PC-3 (cell line): ENCODE measurements at regions of chr3 and their contacts with region 1.

Region 1: DNA sequence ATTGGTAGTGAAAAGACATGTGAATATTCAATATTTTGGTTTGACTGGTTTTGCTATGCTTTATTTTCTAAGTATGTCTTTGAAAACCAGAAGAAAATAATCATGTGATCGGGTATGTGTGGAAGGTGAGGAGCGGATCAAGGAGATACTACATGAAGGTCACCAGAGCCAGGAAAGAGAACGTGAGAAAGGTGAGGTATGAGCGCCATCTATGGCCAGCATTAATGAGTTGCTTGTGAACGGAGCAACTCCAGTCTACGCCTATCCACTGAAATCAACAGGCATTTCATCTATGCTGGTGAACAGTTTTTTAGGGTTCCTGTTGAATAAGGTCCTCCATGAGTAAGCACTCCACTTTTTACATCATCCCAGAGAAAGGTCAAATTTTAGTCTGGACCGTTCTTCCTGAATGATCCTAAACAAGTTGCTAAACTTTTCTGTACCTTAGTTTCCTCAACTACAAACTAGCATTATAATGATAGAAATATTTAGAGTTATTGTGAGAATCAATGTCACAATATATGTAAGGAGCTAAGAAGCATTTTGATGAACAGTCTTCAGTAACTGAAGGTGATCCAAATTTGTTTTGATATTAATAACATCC is 1435.2 kb upstream of the CADM2 start:
- DNase-seq: peak; percentile 84
- ATAC-seq: peak; percentile 99
- H3K4me3 ChIP-seq: no peak overlapping the region
- H3K27ac ChIP-seq: no peak overlapping the region
- H3K4me1 ChIP-seq: no peaks in the 10 kb centered on the region
- H3K27me3 ChIP-seq: no peaks in the 10 kb centered on the region
- CTCF ChIP-seq: peak; percentile 92

Region 2: GRCh38 chr3:81871358-81872155 is 1652.0 kb before region 1 on chr3:
- CTCF ChIA-PET with region 1: no interaction called
- POLR2A ChIA-PET with region 1: no interaction called
- intact Hi-C with region 1: loop called (anchors 2 kb)
- DNase-seq: peak; percentile 19
- ATAC-seq: no peak
- H3K4me3 ChIP-seq: no peak overlapping the region
- H3K27ac ChIP-seq: no peak overlapping the region
- H3K4me1 ChIP-seq: no peaks in the 10 kb centered on the region
- H3K27me3 ChIP-seq: no peaks in the 10 kb centered on the region
- CTCF ChIP-seq: peak; percentile 65

Region 3: GRCh38 chr3:82643948-82644347 is 879.6 kb before region 1 on chr3:
- CTCF ChIA-PET with region 1: no interaction called
- POLR2A ChIA-PET with region 1: no interaction called
- intact Hi-C with region 1: loop called (anchors 1 kb)
- DNase-seq: peak; percentile 51
- ATAC-seq: peak; percentile 92
- H3K4me3 ChIP-seq: no peak overlapping the region
- H3K27ac ChIP-seq: no peak overlapping the region
- H3K4me1 ChIP-seq: 0 out of 2 replicates have a peak, but pooled peaks cover 4% of the 10 kb centered on the region
- H3K27me3 ChIP-seq: no peaks in the 10 kb centered on the region
- CTCF ChIP-seq: peak; percentile 55

Region 4: GRCh38 chr3:83235180-83235814 is 288.3 kb before region 1 on chr3:
- CTCF ChIA-PET with region 1: no interaction called
- POLR2A ChIA-PET with region 1: no interaction called
- intact Hi-C with region 1: loop called (anchors 5 kb)
- DNase-seq: peak; percentile 68
- ATAC-seq: peak; percentile 96
- H3K4me3 ChIP-seq: no peak overlapping the region
- H3K27ac ChIP-seq: no peak overlapping the region
- H3K4me1 ChIP-seq: peaks cover 19% of the 10 kb centered on the region
- H3K27me3 ChIP-seq: no peaks in the 10 kb centered on the region
- CTCF ChIP-seq: no peak